ENCODE measurements at regions of chr3 and their contacts with region 1.

Region 1: DNA sequence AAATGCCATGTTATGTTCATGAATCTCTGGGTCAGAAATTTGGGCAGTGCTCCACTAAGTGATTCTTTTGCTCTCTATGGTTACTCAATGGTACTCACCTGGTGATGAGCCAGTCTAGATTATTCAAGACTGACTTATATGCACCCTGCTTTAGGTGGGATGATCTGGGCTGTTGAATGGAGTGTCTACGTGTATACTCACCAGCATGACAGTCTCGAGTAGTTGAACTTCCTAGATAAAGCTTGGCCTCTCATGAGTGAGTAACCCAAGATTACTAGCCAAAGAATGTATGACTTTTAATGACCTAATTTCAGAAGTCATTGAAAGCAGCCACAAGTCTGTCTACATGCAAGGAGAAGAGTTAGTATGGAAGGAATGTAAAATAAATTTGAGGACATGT is 77.5 kb upstream of the CADM2 start:
- DNase-seq: no peak
- H3K4me3 ChIP-seq: no peak overlapping the region
- H3K27ac ChIP-seq: no peak overlapping the region
- H3K4me1 ChIP-seq: no peaks in the 10 kb centered on the region
- H3K27me3 ChIP-seq: no peaks in the 10 kb centered on the region
- CTCF ChIP-seq: no peak
- POLR2A ChIP-seq: no peak

Region 2: DNA sequence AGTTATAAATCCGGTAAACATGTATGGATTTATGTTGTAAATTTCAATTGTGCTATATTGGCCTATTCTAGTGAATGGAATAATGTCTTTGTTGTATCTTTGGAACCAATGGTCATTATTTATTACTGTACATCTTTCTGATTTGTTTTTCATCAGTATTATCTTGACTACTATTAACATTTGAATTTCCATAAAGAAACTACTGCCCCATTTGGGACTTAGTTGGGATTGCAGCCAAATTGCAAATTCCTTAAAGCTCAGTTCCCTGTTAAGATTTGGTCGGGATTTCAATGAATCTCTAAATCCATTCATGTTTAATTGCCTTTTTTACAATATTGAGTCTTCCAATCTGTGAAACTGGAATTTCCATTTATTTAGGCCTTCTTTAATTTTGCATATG is 744.9 kb before region 1 on chr3:
- intact Hi-C with region 1: no loop called
- DNase-seq: no peak
- H3K4me3 ChIP-seq: no peak overlapping the region
- H3K27ac ChIP-seq: no peak overlapping the region
- H3K4me1 ChIP-seq: no peaks in the 10 kb centered on the region
- H3K27me3 ChIP-seq: no peaks in the 10 kb centered on the region
- CTCF ChIP-seq: no peak
- POLR2A ChIP-seq: no peak

Region 3: DNA sequence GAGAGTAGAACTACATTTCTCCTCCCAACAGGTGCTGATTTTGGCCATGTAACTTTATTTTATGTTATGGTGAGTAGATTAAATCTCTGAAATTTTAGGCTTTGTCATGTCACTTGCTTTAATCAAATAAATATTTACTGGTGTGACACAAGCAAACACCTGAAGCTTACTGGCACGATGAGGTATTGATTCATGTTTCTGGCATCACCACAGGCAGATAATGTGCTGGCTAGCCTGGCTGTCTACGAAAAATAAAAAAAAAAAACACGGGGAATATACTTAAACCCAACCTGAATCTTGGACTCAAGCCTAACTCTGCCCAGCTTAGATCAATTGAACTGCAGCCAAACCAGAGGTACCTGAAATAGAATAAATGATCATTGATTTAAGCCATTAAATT is 11.9 kb after region 1 on chr3:
- intact Hi-C with region 1: no loop called
- DNase-seq: no peak
- H3K4me3 ChIP-seq: no peak overlapping the region
- H3K27ac ChIP-seq: no peak overlapping the region
- H3K4me1 ChIP-seq: no peaks in the 10 kb centered on the region
- H3K27me3 ChIP-seq: no peaks in the 10 kb centered on the region
- CTCF ChIP-seq: no peak
- POLR2A ChIP-seq: no peak

Region 4: DNA sequence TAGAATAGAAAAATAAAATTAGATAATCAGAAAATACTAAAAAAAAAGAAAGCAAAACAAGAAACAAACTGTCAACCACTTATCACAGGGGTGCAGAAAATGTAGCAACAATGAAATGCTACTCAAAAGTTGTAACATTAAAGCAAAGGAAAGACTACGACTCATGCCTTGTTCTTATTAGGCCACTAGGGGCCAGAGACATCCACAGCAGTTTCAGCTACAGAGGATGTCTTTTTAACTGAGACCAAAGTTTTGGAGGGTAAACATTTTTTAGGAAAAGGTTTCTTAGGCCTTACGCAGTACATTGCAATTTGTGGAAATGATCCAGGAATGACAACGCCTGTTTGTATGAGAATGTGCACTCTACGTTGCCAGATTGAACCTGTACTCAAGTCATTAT is 62.1 kb after region 1 on chr3:
- intact Hi-C with region 1: loop called (anchors 2 kb)
- DNase-seq: no peak
- H3K4me3 ChIP-seq: no peak overlapping the region
- H3K27ac ChIP-seq: no peak overlapping the region
- H3K4me1 ChIP-seq: no peaks in the 10 kb centered on the region
- H3K27me3 ChIP-seq: no peaks in the 10 kb centered on the region
- CTCF ChIP-seq: no peak
- POLR2A ChIP-seq: no peak